Natural killer cell (primary cell): ENCODE measurements at regions of chr17 and their contacts with region 1.

Region 1: GRCh38 chr17:4789901-4790704 is 1.3 kb downstream of the GLTPD2 start:
- DNase-seq: peak; percentile 78 to 90
- ATAC-seq: peak; percentile 79 to 92 (median 82)
- H3K4me3 ChIP-seq: peak overlapping the region; percentile 59
- H3K4me3 Mint-ChIP-seq: peak overlapping the region; percentile 93
- H3K27ac ChIP-seq: peak overlapping the region; percentile 79
- H3K27ac Mint-ChIP-seq: peak overlapping the region; percentile 85
- H3K4me1 ChIP-seq: peaks cover 33% of the 10 kb centered on the region
- H3K4me1 Mint-ChIP-seq: peaks cover 13 to 16% of the 10 kb centered on the region in 2 donors
- H3K27me3 ChIP-seq: peaks cover 24% of the 10 kb centered on the region
- H3K27me3 Mint-ChIP-seq: peaks cover 19 to 21% of the 10 kb centered on the region in 2 donors
- CTCF ChIP-seq: peak; percentile 84

Region 2: GRCh38 chr17:4709794-4710692 is 80.1 kb before region 1 on chr17 and contains the start of gene ARRB2:
- intact Hi-C with region 1: loop called (anchors 5 kb)
- DNase-seq: peak; percentile 96 to 100
- ATAC-seq: peak; percentile 86 to 96 (median 87)
- H3K4me3 ChIP-seq: peak within 1 kb of the TSS; percentile 96
- H3K4me3 Mint-ChIP-seq: peak within 1 kb of the TSS; percentile 95
- H3K27ac ChIP-seq: peak within 1 kb of the TSS; percentile 88
- H3K27ac Mint-ChIP-seq: peak within 1 kb of the TSS; percentile 90 to 93
- H3K4me1 ChIP-seq: peaks cover 50% of the 10 kb centered on the region
- H3K4me1 Mint-ChIP-seq: peaks cover 43 to 52% of the 10 kb centered on the region in 2 donors
- H3K27me3 ChIP-seq: no peaks in the 10 kb centered on the region
- H3K27me3 Mint-ChIP-seq: no peaks in the 10 kb centered on the region
- CTCF ChIP-seq: peak; percentile 71
- total RNA-seq, gene ARRB2: 314 to 374 (median 335) TPM

Region 3: DNA sequence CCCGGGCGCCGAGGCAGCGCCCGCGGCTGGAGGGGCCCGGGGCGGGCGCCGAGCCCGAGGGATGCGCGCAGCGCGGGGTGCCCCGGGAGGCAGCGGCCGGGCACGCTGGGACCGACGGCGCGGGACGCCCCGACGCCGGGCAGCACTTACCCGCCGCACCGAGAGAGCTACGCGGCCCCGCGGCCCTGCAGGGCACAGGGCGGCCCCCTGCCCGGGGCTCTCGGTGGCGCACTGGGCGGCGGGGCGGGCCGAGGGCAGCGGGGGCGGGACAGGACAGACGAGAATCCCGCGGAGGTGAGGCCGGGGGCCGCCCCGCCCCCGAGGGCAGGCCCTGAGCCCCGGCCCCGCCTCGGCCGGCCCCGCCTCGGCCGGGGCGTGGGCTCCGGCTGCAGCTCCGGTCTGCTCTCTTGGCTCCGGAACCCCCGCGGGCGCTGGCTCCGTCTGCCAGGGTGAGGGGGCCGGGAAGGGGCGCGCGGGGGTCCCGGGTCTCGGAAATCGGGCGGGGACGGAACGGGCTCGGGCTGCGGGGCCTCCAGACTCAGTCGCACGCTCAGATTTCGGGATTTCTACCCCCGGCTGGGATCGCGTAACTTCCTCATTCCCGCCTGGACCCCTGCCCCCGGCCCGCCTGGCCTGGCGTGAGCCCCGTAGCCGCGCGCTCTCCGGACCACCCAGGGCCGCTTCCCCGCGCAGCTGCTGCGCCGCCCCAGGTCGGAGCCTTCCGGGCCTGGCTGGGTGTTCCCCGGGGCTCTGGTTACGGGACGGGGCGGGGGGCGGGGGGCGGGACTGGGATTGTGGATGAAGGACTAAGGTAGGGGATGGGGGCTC is 16.9 kb after region 1 on chr17 and contains the start of gene PLD2:
- intact Hi-C with region 1: loop called (anchors 2 kb)
- DNase-seq: peak; percentile 84 to 92
- ATAC-seq: peak; percentile 99 to 100 (median 99)
- H3K4me3 ChIP-seq: peak within 1 kb of the TSS; percentile 50
- H3K4me3 Mint-ChIP-seq: peak within 1 kb of the TSS; percentile 85
- H3K27ac ChIP-seq: peak within 1 kb of the TSS; percentile 34
- H3K27ac Mint-ChIP-seq: peak within 1 kb of the TSS in 1 of 2 donors; percentile 11
- H3K4me1 ChIP-seq: peaks cover 10% of the 10 kb centered on the region
- H3K4me1 Mint-ChIP-seq: peaks cover 5 to 6% of the 10 kb centered on the region in 2 donors
- H3K27me3 ChIP-seq: no peaks in the 10 kb centered on the region
- H3K27me3 Mint-ChIP-seq: no peaks in the 10 kb centered on the region
- CTCF ChIP-seq: no peak
- total RNA-seq, gene PLD2: 20.8 to 22.7 (median 21.3) TPM